Caco-2 (cell line): ENCODE measurements at regions of chr4 and their contacts with region 1.

Region 1: DNA sequence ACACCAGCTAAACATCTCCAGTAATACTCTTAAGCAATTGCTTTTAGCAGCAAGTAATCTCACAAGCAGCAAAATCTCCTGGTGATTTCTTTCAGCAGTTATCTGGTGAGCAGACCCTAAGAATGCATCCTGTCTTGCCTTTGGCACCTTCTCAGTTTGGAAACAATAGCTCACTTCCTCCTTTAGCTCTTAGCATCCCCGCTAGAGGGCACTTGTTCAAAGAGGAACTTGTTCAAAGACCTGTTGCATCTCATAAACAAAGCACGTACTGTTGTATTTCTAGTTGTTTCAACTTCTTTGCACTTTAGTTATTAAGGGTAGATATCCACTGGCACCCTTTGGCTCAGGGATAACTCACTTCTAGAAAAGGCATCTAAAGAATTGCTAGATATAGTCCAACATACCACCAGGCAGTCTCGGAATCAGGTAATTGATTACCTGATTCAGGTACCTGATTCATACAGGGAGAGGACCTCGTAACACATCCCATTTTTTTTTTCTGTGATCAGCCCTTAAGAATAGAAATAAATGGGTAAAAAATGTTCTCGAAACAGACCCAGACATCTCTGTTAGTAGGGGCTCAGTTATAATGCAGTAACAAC is 81.9 kb upstream of the QRFPR start:
- DNase-seq: peak; percentile 50 to 62
- H3K4me3 ChIP-seq: no peak overlapping the region
- H3K4me3 Mint-ChIP-seq: no peak overlapping the region
- H3K27ac Mint-ChIP-seq: no peak overlapping the region
- H3K4me1 ChIP-seq: no peaks in the 10 kb centered on the region
- H3K4me1 Mint-ChIP-seq: no peaks in the 10 kb centered on the region
- H3K27me3 ChIP-seq: no peaks in the 10 kb centered on the region
- H3K27me3 Mint-ChIP-seq: peaks cover 2% of the 10 kb centered on the region
- CTCF ChIP-seq: peak; percentile 60 to 77

Region 2: DNA sequence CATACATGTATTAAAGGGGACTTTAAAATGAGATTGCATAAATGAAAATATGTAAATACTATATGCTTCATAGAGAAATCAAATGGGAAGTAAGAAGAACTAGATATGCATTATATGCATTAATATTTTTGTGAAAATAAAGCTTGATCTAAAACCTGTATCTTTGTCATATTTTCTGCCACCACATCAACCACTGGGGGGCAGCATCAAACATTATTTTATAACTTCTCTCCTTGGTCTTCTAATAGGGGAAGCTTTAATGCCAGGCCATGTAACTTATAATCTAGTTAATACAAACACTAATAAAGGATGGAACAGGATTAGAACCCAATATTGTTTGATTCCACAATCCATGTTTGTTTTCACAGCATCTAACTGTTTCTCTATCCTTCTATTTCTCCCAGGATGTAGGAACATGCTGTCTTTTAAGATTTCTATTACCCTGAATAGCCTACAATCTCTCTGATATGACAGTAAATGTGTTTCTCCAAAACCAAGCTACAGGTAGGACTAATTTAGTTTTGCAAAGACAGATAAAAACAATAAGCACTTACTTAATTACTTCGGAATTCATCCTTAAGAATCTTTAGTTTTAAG is 91.9 kb before region 1 on chr4:
- CTCF ChIA-PET with region 1: interaction called, 6 read pairs
- POLR2A ChIA-PET with region 1: no interaction called
- intact Hi-C with region 1: loop called (anchors 5 kb)
- DNase-seq: peak in 1 of 2 experiments; percentile 43
- H3K4me3 ChIP-seq: no peak overlapping the region
- H3K4me3 Mint-ChIP-seq: no peak overlapping the region
- H3K27ac Mint-ChIP-seq: no peak overlapping the region
- H3K4me1 ChIP-seq: no peaks in the 10 kb centered on the region
- H3K4me1 Mint-ChIP-seq: no peaks in the 10 kb centered on the region
- H3K27me3 ChIP-seq: no peaks in the 10 kb centered on the region
- H3K27me3 Mint-ChIP-seq: peaks cover 9% of the 10 kb centered on the region
- CTCF ChIP-seq: peak; percentile 51 to 52